Mucosa of descending colon (tissue), 3 donors: ENCODE measurements at regions of chr1 and their contacts with region 1.

Region 1: DNA sequence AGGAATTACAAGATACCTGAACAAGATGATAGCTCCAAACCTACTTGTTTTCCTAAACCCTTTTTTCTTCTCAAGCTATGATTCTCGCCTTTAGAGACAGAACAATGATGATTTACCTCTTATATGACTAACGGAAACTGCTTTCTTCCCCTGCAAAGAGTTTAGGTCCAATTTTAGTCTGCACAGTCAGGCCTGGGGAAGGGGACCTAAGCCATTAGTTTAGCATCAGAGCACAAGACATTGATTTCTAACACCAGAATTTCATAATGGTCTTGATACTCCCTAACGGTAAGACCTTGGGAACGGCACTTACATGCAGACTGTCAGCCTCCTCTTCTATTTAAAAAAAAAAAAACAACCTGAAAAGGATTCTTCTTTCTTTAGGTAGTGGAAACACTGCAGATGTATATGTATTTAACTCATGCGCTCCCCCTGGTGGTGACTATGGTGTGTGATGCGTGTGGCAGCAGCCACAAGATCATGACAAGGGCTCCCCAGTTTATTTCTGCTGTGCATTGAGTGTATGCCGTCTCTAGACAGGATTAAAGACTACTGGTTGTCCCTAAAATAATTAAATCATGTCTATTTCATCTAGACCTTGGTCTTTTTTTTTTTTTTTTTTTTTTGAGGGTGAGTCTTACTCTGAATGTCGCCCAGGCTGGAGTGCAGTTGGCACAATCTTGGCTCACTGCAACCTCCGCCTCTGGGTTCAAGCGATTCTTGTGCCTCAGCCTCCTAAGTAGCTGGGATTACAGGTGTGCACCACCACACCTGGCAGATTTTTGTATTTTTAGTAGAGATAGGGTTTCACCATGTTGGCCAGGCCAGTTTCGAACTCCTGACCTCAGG is 37.3 kb upstream of the TMEM222 start:
- DNase-seq: peak; percentile 72 to 99 (median 83)
- ATAC-seq: peak; percentile 94
- H3K4me3 ChIP-seq: no peak overlapping the region
- H3K4me1 ChIP-seq: no peaks in the 10 kb centered on the region
- CTCF ChIP-seq: peak; percentile 74

Region 2: GRCh38 chr1:27102707-27103491 is 181.8 kb before region 1 on chr1:
- intact Hi-C with region 1: loop called (anchors 5 kb)
- DNase-seq: peak; percentile 74 to 87 (median 86)
- ATAC-seq: peak; percentile 80
- H3K4me3 ChIP-seq: no peak overlapping the region
- H3K4me1 ChIP-seq: peaks cover 10% of the 10 kb centered on the region
- CTCF ChIP-seq: peak; percentile 89

Region 3: DNA sequence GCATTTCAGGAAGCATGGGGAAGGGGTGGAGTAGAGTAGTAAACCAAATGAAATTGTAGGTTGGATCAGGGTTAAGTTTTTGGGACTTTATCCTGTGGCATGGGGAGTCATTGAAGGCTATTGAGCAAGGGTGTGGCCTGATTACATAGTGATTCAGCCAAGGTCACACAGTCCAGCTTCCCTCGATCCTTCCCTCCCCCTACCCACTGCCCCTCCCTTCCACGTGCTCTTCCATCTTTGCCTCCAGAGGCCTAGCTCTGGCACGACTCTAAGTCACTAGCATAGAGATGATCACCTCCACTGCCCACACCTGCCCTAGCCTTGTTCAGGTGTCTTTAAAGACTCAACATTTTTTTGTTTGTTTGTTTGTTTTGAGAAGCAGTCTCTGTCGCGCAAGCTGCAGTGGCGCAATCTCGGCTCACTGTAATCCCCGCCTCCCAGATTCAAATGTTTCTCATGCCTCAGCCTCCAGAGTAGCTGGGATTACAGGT is 92.6 kb before region 1 on chr1:
- intact Hi-C with region 1: loop called in 1 of 2 experiments (anchors 10 kb)
- DNase-seq: peak; percentile 60 to 77 (median 72)
- ATAC-seq: peak; percentile 94
- H3K4me3 ChIP-seq: no peak overlapping the region
- H3K4me1 ChIP-seq: peaks cover 12% of the 10 kb centered on the region
- CTCF ChIP-seq: no peak